Breast epithelium (tissue), 4 donors: ENCODE measurements at regions of chr1 and their contacts with region 1.

Region 1: DNA sequence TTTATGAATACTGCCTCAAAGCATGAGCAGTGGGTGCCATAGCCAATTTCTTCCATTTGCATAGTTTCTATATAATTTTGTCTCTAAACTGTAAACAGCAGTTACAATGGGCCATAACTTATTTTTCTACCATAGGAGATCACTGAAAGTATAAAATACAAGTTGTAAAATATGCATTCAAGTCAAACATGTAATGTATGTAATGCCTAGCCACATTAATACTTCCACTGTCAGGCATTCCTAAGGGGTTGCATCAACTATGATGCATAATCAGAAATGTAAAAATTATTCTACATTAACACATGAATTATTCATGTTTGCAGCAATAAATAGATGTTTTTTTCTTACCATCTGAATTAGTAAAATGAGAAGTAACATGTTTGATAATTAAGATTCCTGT is 560.3 kb upstream of the ZP4 start:
- DNase-seq: no peak
- H3K4me3 ChIP-seq: no peak overlapping the region
- H3K27ac ChIP-seq: no peak overlapping the region
- H3K4me1 ChIP-seq: no peaks in the 10 kb centered on the region
- H3K27me3 ChIP-seq: no peaks in the 10 kb centered on the region
- CTCF ChIP-seq: no peak
- POLR2A ChIP-seq: no peak

Region 2: DNA sequence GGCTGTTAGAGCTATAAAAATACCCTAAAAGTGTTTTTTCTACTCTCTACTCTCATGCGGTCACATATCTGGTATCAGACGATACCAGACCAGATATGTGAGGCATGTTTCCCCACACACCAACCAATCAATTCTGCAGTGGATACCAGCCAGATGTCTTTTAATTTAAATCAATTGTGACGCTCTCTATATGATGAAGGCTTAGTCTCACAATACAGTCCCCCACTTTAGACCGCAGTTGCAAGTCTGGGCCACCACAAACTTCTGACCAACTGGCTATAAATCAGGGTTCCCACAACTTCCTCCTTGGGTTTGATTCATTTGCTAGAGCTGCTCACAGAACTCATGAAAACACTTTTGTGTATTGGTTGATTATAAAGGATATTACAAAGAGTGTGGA is 25.9 kb after region 1 on chr1:
- intact Hi-C with region 1: no loop called
- DNase-seq: no peak
- H3K4me3 ChIP-seq: no peak overlapping the region
- H3K27ac ChIP-seq: no peak overlapping the region
- H3K4me1 ChIP-seq: no peaks in the 10 kb centered on the region
- H3K27me3 ChIP-seq: no peaks in the 10 kb centered on the region
- CTCF ChIP-seq: no peak
- POLR2A ChIP-seq: no peak

Region 3: GRCh38 chr1:239151937-239152336 is 701.0 kb after region 1 on chr1:
- intact Hi-C with region 1: loop called (anchors 5 kb)
- DNase-seq: no peak
- H3K4me3 ChIP-seq: no peak overlapping the region
- H3K27ac ChIP-seq: no peak overlapping the region
- H3K4me1 ChIP-seq: no peaks in the 10 kb centered on the region
- H3K27me3 ChIP-seq: no peaks in the 10 kb centered on the region
- CTCF ChIP-seq: no peak
- POLR2A ChIP-seq: no peak